Ascending aorta (tissue), 2 donors: ENCODE measurements at regions of chr3 and their contacts with region 1.

Region 1: GRCh38 chr3:187107989-187108388 is 31.3 kb downstream of the RPL39L start:
- DNase-seq: peak in 1 of 2 donors; percentile 77
- H3K4me3 ChIP-seq: no peak overlapping the region
- H3K27ac ChIP-seq: peak overlapping the region; percentile 82 to 86
- H3K4me1 ChIP-seq: peaks cover 10 to 39% of the 10 kb centered on the region in 2 donors
- H3K27me3 ChIP-seq: no peaks in the 10 kb centered on the region
- CTCF ChIP-seq: no peak

Region 2: GRCh38 chr3:187016639-187017345 is 91.2 kb before region 1 on chr3:
- intact Hi-C with region 1: no loop called
- DNase-seq: no peak
- H3K4me3 ChIP-seq: no peak overlapping the region
- H3K27ac ChIP-seq: no peak overlapping the region
- H3K4me1 ChIP-seq: peaks cover 8 to 11% of the 10 kb centered on the region in 2 donors
- H3K27me3 ChIP-seq: no peaks in the 10 kb centered on the region
- CTCF ChIP-seq: no peak

Region 3: GRCh38 chr3:187139126-187139894 is 31.3 kb after region 1 on chr3 and contains the start of gene RPL39L:
- intact Hi-C with region 1: loop called (anchors 2 kb)
- DNase-seq: peak; percentile 35 to 90
- H3K4me3 ChIP-seq: peak within 1 kb of the TSS; percentile 65 to 76
- H3K27ac ChIP-seq: peak within 1 kb of the TSS; percentile 80 to 84
- H3K4me1 ChIP-seq: no peaks in the 10 kb centered on the region
- H3K27me3 ChIP-seq: no peaks in the 10 kb centered on the region
- CTCF ChIP-seq: peak; percentile 88 to 94 (median 90)
- total RNA-seq, gene RPL39L: 3.1 TPM